HAP-1 (cell line): ENCODE measurements at regions of chr6 and their contacts with region 1.

Region 1: DNA sequence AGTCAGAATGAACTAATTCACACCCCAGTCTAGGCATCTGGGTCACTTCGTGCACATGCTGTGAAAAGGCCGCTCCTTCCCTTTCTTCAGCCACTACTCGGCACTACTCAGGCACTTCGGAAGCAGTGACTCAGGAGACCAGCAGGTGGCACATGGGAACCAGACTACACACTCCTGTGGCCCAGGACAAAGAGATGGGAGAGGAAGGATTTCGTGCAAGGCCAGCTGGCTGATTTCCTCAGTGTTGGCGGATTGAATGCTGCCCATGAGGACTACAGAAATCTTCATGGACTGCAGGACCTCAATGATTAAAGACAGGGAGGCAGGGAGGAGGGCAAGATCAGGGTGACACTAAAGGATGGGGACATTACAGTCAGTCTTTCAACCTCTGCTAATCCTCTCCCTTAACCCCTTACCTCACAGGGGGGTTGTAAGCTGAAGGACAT is 117.8 kb upstream of the SPACA1 start:
- DNase-seq: peak; percentile 89
- H3K4me3 ChIP-seq: no peak overlapping the region
- H3K4me1 ChIP-seq: peaks cover 9% of the 10 kb centered on the region
- H3K27me3 ChIP-seq: no peaks in the 10 kb centered on the region

Region 2: DNA sequence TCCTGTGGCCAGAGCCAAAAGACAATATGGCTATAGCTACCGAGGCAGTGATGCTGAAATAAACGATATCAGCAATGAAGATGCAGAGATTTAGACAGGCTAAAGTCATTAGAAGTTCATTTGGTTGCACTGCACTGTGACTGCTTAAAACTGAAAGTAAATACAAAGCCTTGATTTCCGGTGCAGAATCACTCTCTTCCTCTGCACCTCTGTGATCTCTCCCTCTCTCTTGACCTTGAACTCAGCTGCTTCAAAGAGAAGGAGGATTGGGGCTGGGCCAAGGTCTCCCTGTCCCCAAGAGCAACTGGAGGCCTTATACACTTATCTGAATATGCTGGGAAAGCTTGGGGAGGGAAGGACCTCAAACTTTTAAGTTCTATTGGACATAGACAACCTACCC is 83.1 kb after region 1 on chr6:
- in situ Hi-C with region 1: no loop called
- DNase-seq: no peak
- H3K4me3 ChIP-seq: no peak overlapping the region
- H3K4me1 ChIP-seq: peaks cover 7% of the 10 kb centered on the region
- H3K27me3 ChIP-seq: no peaks in the 10 kb centered on the region

Region 3: DNA sequence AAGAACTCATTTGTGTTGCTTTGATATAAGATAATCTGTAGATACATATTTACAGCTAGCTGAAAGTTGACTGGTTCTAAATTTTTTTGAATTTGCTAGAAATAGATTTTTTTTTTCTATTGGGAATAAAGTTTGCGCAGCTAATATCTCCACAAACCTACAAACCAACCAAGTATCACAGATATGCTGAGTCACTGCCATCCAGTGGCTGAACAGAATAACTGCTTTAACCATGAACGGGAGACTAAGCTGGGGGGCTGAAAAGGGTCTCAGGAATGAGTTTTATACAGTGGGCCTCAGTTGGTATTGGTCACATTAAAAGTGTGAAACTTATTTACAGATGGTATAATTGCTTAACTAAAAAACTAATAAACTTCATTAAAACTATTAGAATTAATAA is 563.0 kb after region 1 on chr6:
- in situ Hi-C with region 1: loop called (anchors 25 kb)
- DNase-seq: peak; percentile 40 to 48
- H3K4me3 ChIP-seq: no peak overlapping the region
- H3K4me1 ChIP-seq: peaks cover 22% of the 10 kb centered on the region
- H3K27me3 ChIP-seq: no peaks in the 10 kb centered on the region

Region 4: DNA sequence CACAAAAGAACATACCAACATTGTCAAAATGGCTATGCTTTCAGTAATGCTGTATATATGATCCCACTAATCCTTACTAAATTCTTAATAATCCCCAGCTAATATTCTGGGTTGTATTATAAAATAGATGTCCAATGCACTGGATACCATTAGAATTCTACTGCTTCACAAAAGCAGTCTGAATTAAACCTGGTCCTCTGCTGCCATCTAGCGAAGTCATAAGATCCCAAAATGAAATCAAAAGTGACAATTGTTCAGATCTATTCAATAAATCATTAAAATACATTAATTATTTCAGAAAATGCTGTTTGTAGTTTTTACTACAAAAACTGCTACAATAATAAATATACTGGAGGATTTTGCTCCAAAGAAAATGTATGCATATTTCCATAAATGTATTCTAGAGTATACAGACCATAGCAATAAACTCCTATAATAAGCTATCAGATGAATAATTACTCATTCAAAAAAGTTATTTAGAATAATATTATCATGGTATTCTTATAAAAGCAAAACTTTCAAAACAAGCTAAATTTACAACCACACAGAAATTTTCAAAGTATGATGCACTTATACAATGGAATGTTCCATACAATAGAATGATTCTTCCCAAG is 941.0 kb after region 1 on chr6:
- in situ Hi-C with region 1: loop called (anchors 25 kb)
- DNase-seq: peak; percentile 60 to 61
- H3K4me3 ChIP-seq: no peak overlapping the region
- H3K4me1 ChIP-seq: peaks cover 10% of the 10 kb centered on the region; the same call in 1 of the 2 replicates
- H3K27me3 ChIP-seq: no peaks in the 10 kb centered on the region